ENCODE measurements at regions of chr5 and their contacts with region 1.

Region 1: DNA sequence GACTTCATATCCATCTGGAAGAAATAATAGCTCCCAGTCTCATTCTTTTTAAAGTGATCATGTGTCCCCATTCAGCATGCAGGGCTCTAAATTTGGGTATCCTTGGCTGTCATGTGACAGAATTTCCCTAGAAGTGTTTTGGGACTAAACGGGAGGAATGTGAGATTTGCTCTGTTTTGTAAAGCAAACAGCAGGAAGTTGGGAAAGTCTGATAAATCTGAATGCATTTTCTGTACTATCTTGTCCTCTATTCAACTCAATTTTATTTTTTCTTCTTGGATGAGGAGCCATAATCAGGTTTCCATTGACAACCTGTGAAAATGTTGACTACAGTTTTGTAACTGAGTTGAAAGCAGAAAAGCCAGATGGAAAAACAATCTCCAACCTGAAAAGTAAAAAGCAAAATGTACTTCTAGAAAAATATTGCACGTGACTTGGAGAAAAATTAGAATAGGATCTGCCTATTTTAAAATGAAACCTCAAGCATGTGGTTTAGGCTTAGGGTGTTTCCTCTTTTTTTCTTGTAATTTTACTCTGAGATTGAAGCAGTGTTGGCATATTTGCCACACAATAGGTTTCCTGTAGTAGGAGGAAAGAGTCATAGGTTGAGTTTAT is 76.2 kb upstream of the IL6ST start:
- DNase-seq: no peak
- H3K4me3 ChIP-seq: peak overlapping the region in 1 of 4 donors; percentile 16
- H3K27ac ChIP-seq: peak overlapping the region in 4 of 5 donors; percentile 27 to 62 (median 30)
- H3K4me1 ChIP-seq: peaks cover 14 to 37% of the 10 kb centered on the region in 2 donors
- H3K27me3 ChIP-seq: no peaks in the 10 kb centered on the region
- CTCF ChIP-seq: no peak
- POLR2A ChIP-seq: no peak

Region 2: GRCh38 chr5:55923177-55923771 is 147.7 kb before region 1 on chr5:
- intact Hi-C with region 1: no loop called
- DNase-seq: peak in 3 of 7 donors; percentile 22 to 36 (median 25)
- H3K4me3 ChIP-seq: peak overlapping the region in 1 of 4 donors; percentile 36
- H3K27ac ChIP-seq: peak overlapping the region in 2 of 5 donors; percentile 13 to 54
- H3K4me1 ChIP-seq: no peaks in the 10 kb centered on the region
- H3K27me3 ChIP-seq: no peaks in the 10 kb centered on the region
- CTCF ChIP-seq: no peak
- POLR2A ChIP-seq: no peak

Region 3: GRCh38 chr5:56003179-56003578 is 67.8 kb before region 1 on chr5:
- intact Hi-C with region 1: loop called in 1 of 2 experiments (anchors 10 kb)
- DNase-seq: peak in 6 of 7 donors; percentile 32 to 85 (median 58)
- H3K4me3 ChIP-seq: no peak overlapping the region
- H3K27ac ChIP-seq: peak overlapping the region in 2 of 5 donors; percentile 53 to 65
- H3K4me1 ChIP-seq: peaks cover 0 to 8% of the 10 kb centered on the region in 2 donors
- H3K27me3 ChIP-seq: no peaks in the 10 kb centered on the region
- CTCF ChIP-seq: no peak
- POLR2A ChIP-seq: no peak

Region 4: DNA sequence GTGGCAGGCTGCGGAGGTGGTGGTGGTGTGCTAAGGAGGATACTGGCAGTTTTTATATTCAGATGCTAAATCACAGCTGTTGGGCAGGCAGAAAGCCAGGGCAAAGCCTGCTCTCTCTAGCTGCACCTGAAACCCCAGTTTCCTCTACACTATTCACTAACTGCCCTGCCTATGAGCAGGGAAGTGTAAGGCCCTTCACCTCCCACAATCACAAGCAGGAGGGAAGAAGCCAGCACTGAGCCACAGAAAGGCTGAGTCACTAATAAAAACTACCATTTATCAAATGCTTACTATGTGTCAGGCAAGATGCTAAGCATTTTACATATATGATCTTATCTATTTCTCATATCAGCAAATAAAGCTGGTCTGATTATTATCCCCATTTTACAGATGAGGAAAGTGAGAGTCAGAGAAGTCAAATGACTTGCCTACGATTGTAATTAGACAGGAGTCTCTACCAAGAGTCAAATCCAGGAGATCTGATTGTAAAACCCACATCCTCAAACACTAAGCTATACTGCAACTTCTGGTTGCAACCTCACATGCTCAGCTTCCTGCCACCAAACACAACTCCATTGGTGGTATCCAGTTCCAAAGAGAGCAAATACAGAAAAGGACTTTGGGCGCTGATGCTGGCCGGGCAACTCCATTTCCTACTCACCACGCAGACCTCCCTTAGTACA is 58.5 kb before region 1 on chr5:
- intact Hi-C with region 1: loop called (anchors 10 kb)
- DNase-seq: peak in 2 of 7 donors; percentile 16 to 26
- H3K4me3 ChIP-seq: no peak overlapping the region
- H3K27ac ChIP-seq: peak overlapping the region in 2 of 5 donors; percentile 55 to 63
- H3K4me1 ChIP-seq: peaks cover 0 to 10% of the 10 kb centered on the region in 2 donors
- H3K27me3 ChIP-seq: no peaks in the 10 kb centered on the region
- CTCF ChIP-seq: no peak
- POLR2A ChIP-seq: no peak

Measured in adrenal gland (tissue), 19 donors.